ENCODE measurements at regions of chr3 and their contacts with region 1.

Region 1: GRCh38 chr3:179373938-179374337 is 26.4 kb downstream of the MFN1 start:
- DNase-seq: no peak
- H3K4me3 ChIP-seq: no peak overlapping the region
- H3K27ac ChIP-seq: no peak overlapping the region
- H3K4me1 ChIP-seq: no peaks in the 10 kb centered on the region
- H3K27me3 ChIP-seq: no peaks in the 10 kb centered on the region
- CTCF ChIP-seq: no peak
- EP300 ChIP-seq: no peak
- POLR2A ChIP-seq: no peak

Region 2: DNA sequence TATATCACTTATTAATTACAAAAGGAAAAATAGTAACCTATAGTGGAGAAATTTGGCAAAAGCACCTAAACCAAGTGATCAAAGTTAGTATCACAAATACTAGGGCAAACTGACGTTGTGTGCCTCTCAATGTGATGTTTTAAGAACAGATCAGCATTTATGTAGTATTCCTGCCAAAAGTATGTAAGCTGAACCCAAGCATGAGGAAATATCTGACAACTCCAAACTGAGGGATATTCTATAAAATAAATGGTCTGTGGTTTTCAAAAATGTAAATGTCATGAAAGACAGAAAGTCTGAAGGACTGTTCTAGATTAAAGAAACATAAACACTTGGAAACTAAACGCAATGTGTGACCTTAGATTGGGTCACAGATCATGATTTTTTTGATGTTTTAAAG is 260.0 kb before region 1 on chr3:
- in situ Hi-C with region 1: no loop called
- intact Hi-C with region 1: no loop called
- DNase-seq: no peak
- H3K4me3 ChIP-seq: no peak overlapping the region
- H3K27ac ChIP-seq: no peak overlapping the region
- H3K4me1 ChIP-seq: no peaks in the 10 kb centered on the region
- H3K27me3 ChIP-seq: no peaks in the 10 kb centered on the region
- CTCF ChIP-seq: no peak
- EP300 ChIP-seq: no peak
- POLR2A ChIP-seq: no peak

Region 3: DNA sequence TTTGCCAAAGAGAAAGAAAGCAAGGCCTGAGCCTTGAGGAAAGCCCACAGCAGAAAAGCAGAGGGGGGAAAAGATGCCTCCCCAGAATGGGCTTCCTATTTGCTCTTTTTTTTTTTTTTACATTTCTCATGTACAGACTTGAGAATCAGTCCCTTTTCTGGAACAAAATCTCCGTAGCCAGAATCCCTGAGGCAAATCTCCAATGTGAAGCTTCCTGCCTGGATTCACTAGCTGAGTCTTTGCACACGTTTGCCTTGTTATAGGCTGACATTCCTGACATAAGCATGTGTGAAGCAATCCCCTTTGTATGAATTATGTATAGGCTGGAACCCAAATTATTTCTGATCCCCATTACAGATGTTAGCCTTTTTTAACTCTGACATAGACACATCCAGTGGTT is 136.6 kb after region 1 on chr3:
- in situ Hi-C with region 1: no loop called
- intact Hi-C with region 1: no loop called
- DNase-seq: no peak
- H3K4me3 ChIP-seq: no peak overlapping the region
- H3K27ac ChIP-seq: no peak overlapping the region
- H3K4me1 ChIP-seq: no peaks in the 10 kb centered on the region
- H3K27me3 ChIP-seq: no peaks in the 10 kb centered on the region
- CTCF ChIP-seq: no peak
- EP300 ChIP-seq: no peak
- POLR2A ChIP-seq: no peak

Region 4: GRCh38 chr3:179589143-179589542 is 215.2 kb after region 1 on chr3:
- in situ Hi-C with region 1: loop called in 1 of 4 experiments (anchors 25 kb)
- intact Hi-C with region 1: no loop called
- DNase-seq: no peak
- H3K4me3 ChIP-seq: no peak overlapping the region
- H3K27ac ChIP-seq: no peak overlapping the region
- H3K4me1 ChIP-seq: no peaks in the 10 kb centered on the region
- H3K27me3 ChIP-seq: no peaks in the 10 kb centered on the region
- CTCF ChIP-seq: no peak
- EP300 ChIP-seq: no peak
- POLR2A ChIP-seq: no peak